A549 (cell line): ENCODE measurements at regions of chr17 and their contacts with region 1.

Region 1: DNA sequence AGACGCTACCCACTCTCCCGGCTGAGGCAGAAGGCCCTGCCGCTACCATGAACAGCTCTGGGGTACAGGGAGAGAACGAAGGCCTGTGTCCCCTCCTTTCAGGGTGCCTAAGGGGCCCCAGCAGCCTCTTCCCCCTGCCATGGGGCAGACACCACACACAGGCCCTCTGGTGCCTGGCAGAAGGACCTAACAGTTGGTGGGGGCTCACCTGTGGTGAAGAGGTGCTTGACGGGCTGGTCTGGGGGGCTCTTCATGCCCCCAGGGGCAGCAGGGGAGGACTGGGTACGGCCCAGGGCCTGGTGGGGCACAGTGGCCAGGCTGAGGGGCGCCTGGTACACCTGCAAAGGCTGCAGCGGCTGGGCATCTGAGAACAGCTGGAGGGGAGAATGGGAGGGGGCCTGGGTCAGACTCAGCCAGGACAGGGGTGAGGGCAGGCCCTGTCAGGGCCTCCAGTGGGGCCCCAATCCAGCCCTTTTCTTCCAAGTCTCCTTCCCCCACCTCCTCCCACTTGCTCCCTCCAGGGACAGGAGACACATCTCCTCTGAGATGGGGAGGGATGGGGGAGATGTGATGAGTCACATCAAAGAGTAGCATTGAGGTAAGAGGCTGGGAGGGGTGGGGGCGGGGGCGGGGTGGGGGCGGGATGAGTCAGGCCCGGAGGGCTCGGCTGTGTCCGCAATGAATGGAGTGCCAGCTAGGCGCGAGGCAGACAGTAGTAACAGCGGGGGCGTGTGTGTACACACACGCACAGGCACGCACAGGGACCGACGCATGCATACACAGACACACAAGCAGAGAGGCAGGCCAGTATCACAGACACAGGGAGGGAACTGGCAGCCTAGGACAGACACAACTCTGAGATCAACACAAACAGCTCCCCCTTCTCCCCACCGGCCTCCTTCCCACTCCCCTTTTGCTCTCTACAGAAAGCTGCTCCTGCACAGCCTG is 16.1 kb downstream of the G6PC3 start:
- DNase-seq: peak; percentile 87 to 96
- ATAC-seq: peak; percentile 65 to 76
- H3K4me3 ChIP-seq: peak overlapping the region; percentile 0; the same call in 1 of the 3 replicates
- H3K27ac ChIP-seq: peak overlapping the region; percentile 84 to 89
- H3K4me1 ChIP-seq: peaks cover 32% of the 10 kb centered on the region
- CTCF ChIP-seq: no peak
- EP300 ChIP-seq: peak in 1 of 2 experiments; percentile 42; a peak in 1 of 5 replicates
- POLR2A ChIP-seq: no peak
- RAD21 ChIP-seq: peak in 1 of 2 experiments; percentile 49; a peak in 3 of 5 replicates

Region 2: DNA sequence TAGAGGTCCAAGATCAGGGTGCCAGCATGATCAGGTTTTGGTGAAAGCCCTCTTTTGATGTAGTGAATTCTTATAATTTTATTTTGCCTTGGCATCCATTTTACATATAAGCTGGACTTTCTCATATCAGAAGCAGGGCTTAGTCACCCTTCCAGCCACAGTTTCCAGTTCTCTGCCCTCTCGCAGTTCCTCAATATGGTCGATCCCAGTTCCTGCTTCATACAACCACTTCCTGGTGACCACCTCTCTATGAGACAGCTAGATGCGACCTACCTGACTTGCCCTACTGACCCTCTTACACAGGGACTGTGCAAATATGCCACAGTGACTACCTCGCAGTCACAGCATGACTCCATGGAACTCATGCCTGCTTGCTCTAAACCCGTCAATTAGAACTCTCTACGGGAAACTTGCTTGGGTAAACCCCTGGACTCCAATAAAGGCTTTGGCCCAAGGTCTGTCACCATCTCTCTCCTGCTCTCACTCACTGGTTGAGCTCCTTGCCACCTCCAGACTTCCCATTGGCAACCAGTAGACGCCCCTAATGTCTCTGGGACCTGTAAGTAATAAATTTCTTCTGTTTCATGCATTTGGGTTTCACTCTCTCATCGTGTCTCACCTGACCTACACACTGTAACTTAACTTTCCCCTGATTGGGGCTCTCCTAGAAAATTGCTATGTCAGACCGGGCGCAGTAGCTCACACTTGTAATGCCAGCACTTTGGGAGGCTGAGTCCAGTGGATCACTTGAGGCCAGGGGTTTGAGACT is 218.2 kb before region 1 on chr17:
- CTCF ChIA-PET with region 1: no interaction called
- POLR2A ChIA-PET with region 1: no interaction called
- DNase-seq: no peak
- ATAC-seq: no peak
- H3K4me3 ChIP-seq: no peak overlapping the region
- H3K27ac ChIP-seq: no peak overlapping the region
- H3K4me1 ChIP-seq: peaks cover 6% of the 10 kb centered on the region; the same call in 2 of the 3 replicates
- CTCF ChIP-seq: no peak
- EP300 ChIP-seq: no peak
- POLR2A ChIP-seq: no peak
- RAD21 ChIP-seq: no peak

Region 3: GRCh38 chr17:44044067-44044466 is 42.6 kb before region 1 on chr17:
- CTCF ChIA-PET with region 1: interaction called, 15 read pairs
- POLR2A ChIA-PET with region 1: no interaction called
- DNase-seq: no peak
- ATAC-seq: no peak
- H3K4me3 ChIP-seq: no peak overlapping the region
- H3K27ac ChIP-seq: 0 out of 6 replicates have a peak overlapping the region, but pooled peaks of 1 of the 2 experiments have one; percentile 0
- H3K4me1 ChIP-seq: peaks cover 11% of the 10 kb centered on the region
- CTCF ChIP-seq: no peak
- EP300 ChIP-seq: no peak
- POLR2A ChIP-seq: no peak
- RAD21 ChIP-seq: no peak

Region 4: DNA sequence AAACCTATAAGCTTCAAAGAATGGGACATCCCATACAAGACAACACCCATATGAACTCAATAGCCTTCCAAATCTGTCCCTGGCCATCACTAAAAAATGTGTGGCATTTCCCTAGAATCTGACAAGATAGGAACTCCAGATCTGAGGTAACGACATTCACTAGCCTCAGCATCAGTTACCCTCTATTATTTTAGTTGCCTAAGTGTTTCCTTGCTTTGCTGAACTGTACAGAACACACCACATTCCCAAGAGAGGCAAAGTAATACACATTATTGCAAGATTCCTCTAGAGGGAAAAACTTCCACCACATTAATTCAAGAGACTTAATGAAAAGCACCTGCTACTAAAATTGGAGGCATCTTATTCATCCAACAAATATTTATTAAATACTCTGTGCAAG is 25.2 kb before region 1 on chr17:
- CTCF ChIA-PET with region 1: interaction called, 23 read pairs
- POLR2A ChIA-PET with region 1: interaction called, 4 read pairs
- DNase-seq: no peak
- ATAC-seq: no peak
- H3K4me3 ChIP-seq: no peak overlapping the region
- H3K27ac ChIP-seq: no peak overlapping the region
- H3K4me1 ChIP-seq: peaks cover 18% of the 10 kb centered on the region
- CTCF ChIP-seq: no peak
- EP300 ChIP-seq: no peak
- POLR2A ChIP-seq: no peak
- RAD21 ChIP-seq: no peak

Region 5: DNA sequence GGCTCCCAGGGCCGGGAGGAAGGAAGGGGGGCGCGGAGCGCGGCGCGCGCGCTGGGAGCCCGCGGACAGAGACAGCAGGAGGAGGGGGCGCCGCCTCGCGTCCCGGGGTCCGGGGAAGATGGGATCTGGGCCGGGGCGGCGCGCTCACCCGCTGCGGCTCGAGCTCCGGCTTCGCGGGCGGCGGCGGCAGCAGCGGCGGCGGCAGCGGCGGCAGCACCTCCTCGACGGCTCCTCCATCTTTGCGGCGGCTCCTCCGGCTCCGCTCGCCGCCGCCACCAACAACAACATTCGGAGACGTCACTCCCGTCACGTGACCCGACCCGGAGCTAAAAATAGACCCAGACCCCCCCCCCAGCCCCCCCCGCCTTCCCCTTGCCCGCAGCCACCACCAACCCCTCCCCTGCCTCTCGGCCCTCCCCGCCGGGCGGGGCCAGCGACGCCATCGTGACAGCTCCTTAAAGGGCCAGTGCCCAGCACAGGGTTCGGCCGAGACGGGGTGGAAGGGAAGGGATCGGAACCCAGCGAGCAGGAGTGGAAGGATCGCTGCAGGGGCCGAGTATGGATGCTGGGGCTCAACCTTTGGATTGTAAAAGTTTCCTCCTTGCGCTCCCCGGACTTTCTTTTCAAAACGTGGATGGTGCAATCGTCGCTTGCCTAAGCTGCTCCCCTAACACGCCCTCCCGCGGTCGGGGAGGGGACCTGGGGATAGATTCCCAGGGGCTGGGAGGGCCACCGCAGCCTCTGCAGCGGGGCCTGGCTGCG is 36.9 kb after region 1 on chr17 and contains the start of gene HDAC5:
- CTCF ChIA-PET with region 1: interaction called, 1,202 read pairs
- POLR2A ChIA-PET with region 1: interaction called, 10 read pairs
- DNase-seq: peak; percentile 92 to 96
- ATAC-seq: peak; percentile 84 to 92
- H3K4me3 ChIP-seq: peak within 1 kb of the TSS; percentile 81
- H3K27ac ChIP-seq: peak within 1 kb of the TSS; percentile 87 to 93
- H3K4me1 ChIP-seq: peaks cover 28% of the 10 kb centered on the region
- CTCF ChIP-seq: peak; percentile 68
- EP300 ChIP-seq: no peak
- POLR2A ChIP-seq: peak; percentile 60
- RAD21 ChIP-seq: peak; percentile 53 to 63
- polyA plus RNA-seq, gene HDAC5: 3.1 and 5.7 TPM in 2 replicates

Region 6: DNA sequence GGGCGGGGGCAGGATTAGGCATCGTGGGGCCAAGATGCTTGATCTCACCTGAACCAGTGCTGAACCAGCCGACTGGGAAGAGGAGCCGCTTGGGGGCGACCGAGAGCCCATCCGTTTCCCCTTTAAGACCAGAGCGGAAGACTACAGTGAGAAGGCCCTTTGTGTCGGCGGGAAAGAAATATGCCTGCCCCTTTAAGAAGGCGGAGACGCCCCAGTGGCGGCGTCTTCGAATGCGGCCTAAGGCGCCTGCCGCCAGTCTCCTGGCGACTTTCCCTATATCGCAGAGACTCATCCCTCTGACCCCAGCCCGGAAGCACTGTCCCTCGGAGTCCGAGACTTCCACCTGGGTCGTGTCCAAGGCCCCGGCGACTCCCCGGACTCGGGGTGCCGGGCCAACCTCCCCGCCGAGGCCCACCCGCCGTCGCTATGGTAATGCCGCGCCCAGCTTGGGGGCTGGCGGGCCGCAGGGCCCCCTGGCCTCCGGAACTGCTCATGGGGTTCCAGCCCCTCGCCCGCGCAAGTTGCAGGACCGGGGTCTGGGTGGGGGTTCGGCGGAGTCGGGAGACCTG is 55.2 kb after region 1 on chr17 and contains the start of gene HROB:
- CTCF ChIA-PET with region 1: interaction called, 16 read pairs
- POLR2A ChIA-PET with region 1: interaction called, 3 read pairs
- DNase-seq: peak; percentile 94 to 99
- ATAC-seq: peak; percentile 74 to 83
- H3K4me3 ChIP-seq: peak within 1 kb of the TSS; percentile 88
- H3K27ac ChIP-seq: peak within 1 kb of the TSS; percentile 83 to 93
- H3K4me1 ChIP-seq: peaks cover 32% of the 10 kb centered on the region
- CTCF ChIP-seq: peak; percentile 92
- EP300 ChIP-seq: no peak
- POLR2A ChIP-seq: no peak
- RAD21 ChIP-seq: peak; percentile 62 to 70
- polyA plus RNA-seq, gene HROB: 5.4 and 5.6 TPM in 2 replicates

Region 7: DNA sequence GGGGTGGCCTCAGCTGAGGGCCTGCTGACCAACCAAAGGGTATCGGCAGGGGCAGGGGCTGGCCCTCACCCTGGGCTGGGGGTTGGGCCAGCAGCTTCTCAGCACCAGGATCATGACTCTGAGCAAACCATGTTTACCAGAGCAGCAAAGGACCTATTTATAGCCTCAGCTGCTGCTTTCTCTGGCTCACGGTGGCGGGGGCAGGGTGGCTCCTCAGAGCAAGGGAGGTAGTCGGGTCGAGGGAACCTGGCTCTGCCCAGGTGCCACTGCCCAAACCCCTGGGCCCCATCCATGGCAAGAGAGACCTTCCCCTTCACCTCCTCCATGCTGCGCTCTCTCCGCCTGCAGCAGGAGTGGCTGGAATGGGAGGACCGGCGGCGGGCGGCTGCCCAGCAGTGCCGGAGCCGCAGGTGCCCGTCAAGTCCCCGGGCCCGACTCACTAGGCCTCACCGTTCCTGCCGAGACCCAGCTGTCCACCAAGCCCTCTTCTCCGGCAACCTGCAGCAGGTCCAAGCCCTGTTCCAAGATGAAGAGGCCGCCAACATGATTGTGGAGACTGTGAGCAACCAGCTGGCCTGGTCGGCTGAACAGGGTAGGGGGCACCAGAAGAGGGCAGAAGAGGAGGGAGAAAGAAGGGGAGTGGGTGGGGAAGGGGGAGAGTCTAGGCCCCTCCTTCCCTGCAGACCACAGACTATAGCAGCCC is 84.0 kb after region 1 on chr17 and contains the start of gene ASB16:
- CTCF ChIA-PET with region 1: interaction called, 53 read pairs
- POLR2A ChIA-PET with region 1: no interaction called
- DNase-seq: no peak
- ATAC-seq: peak; percentile 9 to 11; a peak in 4 of 6 replicates
- H3K4me3 ChIP-seq: no peak within 1 kb of the TSS
- H3K27ac ChIP-seq: peak within 1 kb of the TSS in 1 of 2 experiments; percentile 1; a peak in 2 of 6 replicates
- H3K4me1 ChIP-seq: peaks cover 16% of the 10 kb centered on the region
- CTCF ChIP-seq: no peak
- EP300 ChIP-seq: no peak
- POLR2A ChIP-seq: no peak
- RAD21 ChIP-seq: no peak
- polyA plus RNA-seq, gene ASB16: 0.05 TPM in 1 of 2 replicates, not detected in the other